ENCODE measurements at regions of chr6 and their contacts with region 1.

Region 1: GRCh38 chr6:111057074-111057752 is 30.1 kb upstream of the SLC16A10 start:
- DNase-seq: peak in 6 of 9 donors; percentile 22 to 54 (median 40)
- ATAC-seq: peak; percentile 76
- H3K4me3 ChIP-seq: no peak overlapping the region
- H3K4me3 Mint-ChIP-seq: peak overlapping the region in 1 of 10 donors; percentile 4
- H3K27ac ChIP-seq: no peak overlapping the region
- H3K27ac Mint-ChIP-seq: no peak overlapping the region
- H3K4me1 ChIP-seq: no peaks in the 10 kb centered on the region
- H3K4me1 Mint-ChIP-seq: peaks cover 0 to 6% (median 2%) of the 10 kb centered on the region in 7 donors
- H3K27me3 ChIP-seq: no peaks in the 10 kb centered on the region
- H3K27me3 Mint-ChIP-seq: peaks cover 0 to 6% (median 0%) of the 10 kb centered on the region in 5 donors

Region 2: GRCh38 chr6:110646951-110647910 is 410.0 kb before region 1 on chr6:
- CTCF ChIA-PET with region 1: no interaction called
- POLR2A ChIA-PET with region 1: no interaction called
- intact Hi-C with region 1: no loop called
- DNase-seq: no peak
- ATAC-seq: no peak
- H3K4me3 ChIP-seq: no peak overlapping the region
- H3K4me3 Mint-ChIP-seq: no peak overlapping the region
- H3K27ac ChIP-seq: no peak overlapping the region
- H3K27ac Mint-ChIP-seq: peak overlapping the region in 2 of 9 donors; percentile 14 to 58
- H3K4me1 ChIP-seq: no peaks in the 10 kb centered on the region
- H3K4me1 Mint-ChIP-seq: peaks cover 0 to 6% (median 0%) of the 10 kb centered on the region in 7 donors
- H3K27me3 ChIP-seq: no peaks in the 10 kb centered on the region
- H3K27me3 Mint-ChIP-seq: no peaks in the 10 kb centered on the region

Region 3: GRCh38 chr6:111011360-111012142 is 45.7 kb before region 1 on chr6:
- CTCF ChIA-PET with region 1: no interaction called
- POLR2A ChIA-PET with region 1: no interaction called
- intact Hi-C with region 1: loop called in 1 of 2 experiments (anchors 2 kb)
- DNase-seq: peak in 7 of 9 donors; percentile 18 to 58 (median 50)
- ATAC-seq: peak; percentile 71
- H3K4me3 ChIP-seq: no peak overlapping the region
- H3K4me3 Mint-ChIP-seq: no peak overlapping the region
- H3K27ac ChIP-seq: no peak overlapping the region
- H3K27ac Mint-ChIP-seq: peak overlapping the region in 1 of 9 donors; percentile 16
- H3K4me1 ChIP-seq: no peaks in the 10 kb centered on the region
- H3K4me1 Mint-ChIP-seq: peaks cover 3 to 13% (median 5%) of the 10 kb centered on the region in 7 donors
- H3K27me3 ChIP-seq: no peaks in the 10 kb centered on the region
- H3K27me3 Mint-ChIP-seq: no peaks in the 10 kb centered on the region

Region 4: GRCh38 chr6:111087106-111087835 is 30.1 kb after region 1 on chr6 and contains the start of gene SLC16A10:
- CTCF ChIA-PET with region 1: no interaction called
- POLR2A ChIA-PET with region 1: no interaction called
- intact Hi-C with region 1: loop called in 1 of 2 experiments (anchors 1 kb)
- DNase-seq: peak; percentile 75 to 92 (median 90)
- ATAC-seq: peak; percentile 95
- H3K4me3 ChIP-seq: peak within 1 kb of the TSS; percentile 83
- H3K4me3 Mint-ChIP-seq: peak within 1 kb of the TSS; percentile 85 to 100 (median 97)
- H3K27ac ChIP-seq: peak within 1 kb of the TSS; percentile 80
- H3K27ac Mint-ChIP-seq: peak within 1 kb of the TSS; percentile 54 to 99 (median 96)
- H3K4me1 ChIP-seq: peaks cover 10 to 17% of the 10 kb centered on the region in 2 donors
- H3K4me1 Mint-ChIP-seq: peaks cover 20 to 54% (median 48%) of the 10 kb centered on the region in 7 donors
- H3K27me3 ChIP-seq: no peaks in the 10 kb centered on the region
- H3K27me3 Mint-ChIP-seq: peaks cover 0 to 24% (median 0%) of the 10 kb centered on the region in 5 donors
- total RNA-seq, gene SLC16A10: 1.6 to 27.7 (median 16.7) TPM

Region 5: GRCh38 chr6:111210194-111210728 is 153.0 kb after region 1 on chr6:
- CTCF ChIA-PET with region 1: interaction called, 56 read pairs
- POLR2A ChIA-PET with region 1: interaction called, 5 read pairs
- intact Hi-C with region 1: loop called (anchors 1 kb)
- DNase-seq: peak in 7 of 9 donors; percentile 46 to 73 (median 63)
- ATAC-seq: peak; percentile 88
- H3K4me3 ChIP-seq: no peak overlapping the region
- H3K4me3 Mint-ChIP-seq: no peak overlapping the region
- H3K27ac ChIP-seq: no peak overlapping the region
- H3K27ac Mint-ChIP-seq: peak overlapping the region in 1 of 9 donors; percentile 8
- H3K4me1 ChIP-seq: no peaks in the 10 kb centered on the region
- H3K4me1 Mint-ChIP-seq: peaks cover 0 to 18% (median 9%) of the 10 kb centered on the region in 7 donors
- H3K27me3 ChIP-seq: no peaks in the 10 kb centered on the region
- H3K27me3 Mint-ChIP-seq: no peaks in the 10 kb centered on the region

Region 6: GRCh38 chr6:111478749-111479148 is 421.5 kb after region 1 on chr6:
- CTCF ChIA-PET with region 1: no interaction called
- POLR2A ChIA-PET with region 1: no interaction called
- intact Hi-C with region 1: loop called in 1 of 2 experiments (anchors 2 kb)
- DNase-seq: peak in 7 of 9 donors; percentile 23 to 61 (median 44)
- ATAC-seq: peak; percentile 21
- H3K4me3 ChIP-seq: no peak overlapping the region
- H3K4me3 Mint-ChIP-seq: peak overlapping the region in 1 of 10 donors; percentile 26
- H3K27ac ChIP-seq: peak overlapping the region; percentile 24
- H3K27ac Mint-ChIP-seq: peak overlapping the region in 7 of 9 donors; percentile 31 to 77 (median 62)
- H3K4me1 ChIP-seq: peaks cover 13 to 14% of the 10 kb centered on the region in 2 donors
- H3K4me1 Mint-ChIP-seq: peaks cover 28 to 57% (median 50%) of the 10 kb centered on the region in 7 donors
- H3K27me3 ChIP-seq: no peaks in the 10 kb centered on the region
- H3K27me3 Mint-ChIP-seq: no peaks in the 10 kb centered on the region

Region 7: GRCh38 chr6:112163295-112164257 is 1106.4 kb after region 1 on chr6:
- CTCF ChIA-PET with region 1: no interaction called
- POLR2A ChIA-PET with region 1: no interaction called
- intact Hi-C with region 1: loop called in 1 of 2 experiments (anchors 1 kb)
- DNase-seq: peak; percentile 43 to 81 (median 64)
- ATAC-seq: peak; percentile 97
- H3K4me3 ChIP-seq: no peak overlapping the region
- H3K4me3 Mint-ChIP-seq: peak overlapping the region; percentile 49 to 88 (median 79)
- H3K27ac ChIP-seq: no peak overlapping the region
- H3K27ac Mint-ChIP-seq: peak overlapping the region in 7 of 9 donors; percentile 10 to 79 (median 48)
- H3K4me1 ChIP-seq: peaks cover 3 to 7% of the 10 kb centered on the region in 2 donors
- H3K4me1 Mint-ChIP-seq: peaks cover 9 to 18% (median 14%) of the 10 kb centered on the region in 7 donors
- H3K27me3 ChIP-seq: no peaks in the 10 kb centered on the region
- H3K27me3 Mint-ChIP-seq: peaks cover 25 to 60% (median 48%) of the 10 kb centered on the region in 5 donors